A673 (cell line): ENCODE measurements at regions of chrX and their contacts with region 1.

Region 1: GRCh38 chrX:124211312-124211942 is 121.0 kb upstream of the TEX13D start:
- DNase-seq: peak; percentile 73
- H3K4me3 ChIP-seq: no peak overlapping the region
- H3K27ac ChIP-seq: no peak overlapping the region
- H3K4me1 ChIP-seq: peaks cover 31% of the 10 kb centered on the region
- H3K27me3 ChIP-seq: no peaks in the 10 kb centered on the region
- CTCF ChIP-seq: peak; percentile 70

Region 2: GRCh38 chrX:124378643-124379042 is 167.2 kb after region 1 on chrX:
- CTCF ChIA-PET with region 1: no interaction called
- POLR2A ChIA-PET with region 1: no interaction called
- intact Hi-C with region 1: loop called (anchors 5 kb)
- DNase-seq: peak; percentile 56
- H3K4me3 ChIP-seq: no peak overlapping the region
- H3K27ac ChIP-seq: peak overlapping the region; percentile 66
- H3K4me1 ChIP-seq: peaks cover 17% of the 10 kb centered on the region
- H3K27me3 ChIP-seq: no peaks in the 10 kb centered on the region
- CTCF ChIP-seq: no peak

Region 3: GRCh38 chrX:125198546-125198945 is 987.1 kb after region 1 on chrX:
- CTCF ChIA-PET with region 1: no interaction called
- POLR2A ChIA-PET with region 1: no interaction called
- intact Hi-C with region 1: loop called (anchors 10 kb)
- DNase-seq: peak; percentile 50
- H3K4me3 ChIP-seq: peak overlapping the region; percentile 24
- H3K27ac ChIP-seq: peak overlapping the region; percentile 44
- H3K4me1 ChIP-seq: peaks cover 34% of the 10 kb centered on the region
- H3K27me3 ChIP-seq: no peaks in the 10 kb centered on the region
- CTCF ChIP-seq: no peak